Right cardiac atrium (tissue), 5 donors: ENCODE measurements at regions of chr17 and their contacts with region 1.

Region 1: GRCh38 chr17:66255112-66255511 is 25.9 kb upstream of the APOH start:
- DNase-seq: no peak
- ATAC-seq: peak; percentile 77 to 78
- H3K4me3 ChIP-seq: no peak overlapping the region
- H3K27ac ChIP-seq: no peak overlapping the region
- H3K4me1 ChIP-seq: no peaks in the 10 kb centered on the region
- H3K27me3 ChIP-seq: no peaks in the 10 kb centered on the region

Region 2: GRCh38 chr17:66207936-66208335 is 47.2 kb before region 1 on chr17:
- intact Hi-C with region 1: no loop called
- DNase-seq: no peak
- ATAC-seq: peak in 1 of 2 donors; percentile 50
- H3K4me3 ChIP-seq: no peak overlapping the region
- H3K27ac ChIP-seq: no peak overlapping the region
- H3K4me1 ChIP-seq: no peaks in the 10 kb centered on the region
- H3K27me3 ChIP-seq: no peaks in the 10 kb centered on the region

Region 3: GRCh38 chr17:66567234-66568170 is 312.4 kb after region 1 on chr17:
- intact Hi-C with region 1: loop called in 3 of 4 experiments (anchors 5 to 10 kb)
- DNase-seq: peak; percentile 75 to 92 (median 89)
- ATAC-seq: peak; percentile 77 to 86
- H3K4me3 ChIP-seq: no peak overlapping the region
- H3K27ac ChIP-seq: no peak overlapping the region
- H3K4me1 ChIP-seq: no peaks in the 10 kb centered on the region
- H3K27me3 ChIP-seq: no peaks in the 10 kb centered on the region

Region 4: DNA sequence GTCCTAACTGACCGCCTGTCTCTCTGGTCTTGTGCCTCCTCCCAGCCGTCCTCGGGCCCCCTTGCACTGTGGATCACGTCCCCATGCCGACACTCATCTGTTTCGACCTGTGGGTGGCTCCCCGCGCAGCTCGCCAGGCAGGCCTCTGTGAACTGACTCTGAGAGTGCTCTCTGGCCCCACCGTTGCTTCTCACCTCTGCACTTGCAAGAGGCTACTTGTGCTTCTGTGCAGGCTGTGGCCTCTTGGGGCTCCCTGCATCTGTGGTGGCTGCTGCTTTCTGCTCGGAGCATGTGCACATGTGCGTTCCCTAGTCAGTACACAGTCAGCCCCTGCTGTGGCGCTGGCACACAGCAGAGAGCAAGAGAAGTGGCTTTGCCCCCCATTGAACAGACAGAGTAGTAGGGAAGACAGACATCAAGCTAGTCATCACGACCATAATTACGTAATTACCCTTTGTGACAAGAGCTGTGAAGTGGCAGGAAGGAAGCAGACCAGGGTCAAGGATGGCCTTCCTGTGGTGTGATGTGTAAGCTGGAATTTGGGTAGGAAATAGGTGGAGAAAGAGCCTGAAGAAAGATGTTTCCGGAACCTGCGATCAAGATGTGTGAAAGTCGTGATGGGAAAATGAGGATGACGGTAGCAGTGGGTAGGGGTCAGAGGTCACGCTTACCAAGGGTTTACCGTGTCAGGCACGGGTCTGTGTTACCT is 323.8 kb after region 1 on chr17:
- intact Hi-C with region 1: loop called in 1 of 4 experiments (anchors 10 kb)
- DNase-seq: no peak
- ATAC-seq: no peak
- H3K4me3 ChIP-seq: no peak overlapping the region
- H3K27ac ChIP-seq: no peak overlapping the region
- H3K4me1 ChIP-seq: no peaks in the 10 kb centered on the region
- H3K27me3 ChIP-seq: no peaks in the 10 kb centered on the region

Region 5: GRCh38 chr17:66625311-66625775 is 370.2 kb after region 1 on chr17:
- intact Hi-C with region 1: loop called in 2 of 4 experiments (anchors 5 to 10 kb)
- DNase-seq: no peak
- ATAC-seq: peak in 1 of 2 donors; percentile 45
- H3K4me3 ChIP-seq: no peak overlapping the region
- H3K27ac ChIP-seq: no peak overlapping the region
- H3K4me1 ChIP-seq: no peaks in the 10 kb centered on the region
- H3K27me3 ChIP-seq: no peaks in the 10 kb centered on the region

Region 6: DNA sequence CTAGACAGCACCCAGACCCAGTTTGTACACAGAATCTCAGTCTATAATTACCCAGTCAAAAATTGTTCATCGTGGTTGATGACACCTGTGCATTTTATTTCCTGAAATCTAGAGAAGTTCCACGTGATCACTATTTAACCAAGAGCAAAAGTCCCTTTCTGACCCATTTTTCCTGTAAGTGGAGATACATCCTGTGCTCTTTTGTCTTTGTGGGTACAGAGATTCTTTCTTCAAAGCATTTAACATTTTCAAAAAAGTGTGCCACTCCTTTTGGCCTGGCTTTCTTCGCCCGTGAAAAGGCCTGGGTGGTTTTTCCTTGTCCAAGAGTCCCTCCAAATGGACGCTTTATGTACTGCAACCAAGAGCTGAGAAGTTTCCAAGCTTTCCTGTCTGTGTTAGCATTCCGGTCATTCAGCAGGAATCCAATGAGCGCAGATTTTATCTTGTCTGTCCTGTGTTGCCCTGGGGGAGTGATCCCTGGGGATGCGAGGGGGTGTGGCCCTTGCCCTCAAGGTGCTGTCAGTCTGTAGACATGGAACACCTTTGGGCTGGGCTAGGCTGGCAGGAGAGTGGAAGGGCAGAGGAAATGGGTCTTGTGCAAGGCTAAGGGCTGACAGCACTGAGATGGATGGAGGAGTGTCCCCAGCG is 418.7 kb after region 1 on chr17:
- intact Hi-C with region 1: loop called in 2 of 4 experiments (anchors 5 to 10 kb)
- DNase-seq: no peak
- ATAC-seq: peak; percentile 69 to 70
- H3K4me3 ChIP-seq: no peak overlapping the region
- H3K27ac ChIP-seq: no peak overlapping the region
- H3K4me1 ChIP-seq: no peaks in the 10 kb centered on the region
- H3K27me3 ChIP-seq: no peaks in the 10 kb centered on the region